Sciatic nerve (tissue), 2 donors: ENCODE measurements at regions of chr13 and their contacts with region 1.

Region 1: DNA sequence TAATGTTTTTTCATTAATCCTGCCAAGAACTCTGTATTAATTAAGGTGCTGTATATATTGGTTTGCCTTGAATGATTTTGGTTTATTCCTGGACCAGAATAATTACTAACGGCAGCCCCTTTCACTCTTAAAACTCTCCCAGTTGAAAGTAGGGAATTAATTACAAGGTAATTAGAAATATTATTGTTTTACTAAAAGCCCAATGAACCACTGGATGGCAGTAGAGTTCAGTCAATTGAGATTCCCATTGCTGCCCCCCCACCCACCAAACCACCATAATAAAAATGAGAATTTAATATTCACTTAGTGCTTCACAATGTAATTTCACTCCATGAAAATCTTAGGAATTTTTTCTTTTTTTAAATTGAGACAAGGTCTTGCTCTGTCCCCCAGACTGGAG is 13.7 kb downstream of the WBP4 start:
- DNase-seq: no peak
- ATAC-seq: peak; percentile 55

Region 2: DNA sequence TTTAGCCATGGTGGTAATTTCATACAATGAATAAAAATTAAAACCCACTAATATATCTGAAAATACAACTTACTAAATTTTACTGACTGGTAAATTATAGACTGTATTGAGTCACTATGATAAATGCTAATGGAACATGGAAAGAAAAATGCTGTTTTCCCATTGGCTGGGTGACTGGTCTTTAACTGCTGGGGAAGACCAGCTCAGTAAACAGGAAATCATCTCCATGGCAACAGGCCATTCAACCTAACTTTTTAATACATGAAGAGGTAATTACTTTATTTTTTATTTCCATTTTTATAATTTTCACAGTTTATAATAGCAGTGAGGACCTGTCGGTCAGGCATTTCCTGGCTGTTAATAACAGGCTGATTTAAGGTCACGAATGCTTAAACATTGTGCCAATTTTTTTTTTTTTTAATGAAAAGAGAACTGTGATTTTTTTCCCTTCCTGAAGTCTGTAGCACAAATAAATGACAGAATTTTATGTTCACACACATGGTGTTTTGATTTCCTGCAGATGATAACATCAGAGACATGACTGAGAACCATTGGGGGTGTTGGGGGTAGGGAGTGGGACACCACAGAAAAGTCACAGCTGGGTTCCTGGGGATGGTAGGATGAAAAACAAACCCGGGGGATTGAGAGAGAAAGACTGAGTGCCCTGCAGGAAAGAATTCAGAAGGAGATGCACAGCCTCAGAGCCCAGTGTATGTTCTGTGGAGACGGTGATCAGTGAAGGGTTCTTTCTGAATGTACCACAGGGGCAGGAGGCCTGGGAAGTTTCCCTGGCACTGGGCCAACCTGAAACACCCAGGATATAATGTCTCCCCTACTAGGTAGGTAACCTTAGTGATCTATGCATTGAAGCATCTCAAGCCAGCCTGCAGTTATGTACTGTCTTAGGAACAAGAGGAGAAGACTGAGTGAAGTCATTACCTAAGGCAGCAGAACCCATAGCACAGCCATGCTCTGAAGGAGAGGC is 1122.5 kb before region 1 on chr13:
- intact Hi-C with region 1: no loop called
- DNase-seq: no peak
- ATAC-seq: no peak

Region 3: GRCh38 chr13:40558656-40559055 is 516.4 kb before region 1 on chr13:
- intact Hi-C with region 1: no loop called
- DNase-seq: no peak
- ATAC-seq: no peak

Region 4: GRCh38 chr13:41222259-41222852 is 147.3 kb after region 1 on chr13:
- intact Hi-C with region 1: loop called (anchors 10 kb)
- DNase-seq: no peak
- ATAC-seq: peak; percentile 80